RWPE1 (cell line): ENCODE measurements at regions of chr2 and their contacts with region 1.

Region 1: GRCh38 chr2:191539068-191539467 is 138.9 kb upstream of the NABP1 start:
- DNase-seq: peak; percentile 44
- H3K27ac ChIP-seq: no peak overlapping the region
- CTCF ChIP-seq: peak; percentile 61

Region 2: DNA sequence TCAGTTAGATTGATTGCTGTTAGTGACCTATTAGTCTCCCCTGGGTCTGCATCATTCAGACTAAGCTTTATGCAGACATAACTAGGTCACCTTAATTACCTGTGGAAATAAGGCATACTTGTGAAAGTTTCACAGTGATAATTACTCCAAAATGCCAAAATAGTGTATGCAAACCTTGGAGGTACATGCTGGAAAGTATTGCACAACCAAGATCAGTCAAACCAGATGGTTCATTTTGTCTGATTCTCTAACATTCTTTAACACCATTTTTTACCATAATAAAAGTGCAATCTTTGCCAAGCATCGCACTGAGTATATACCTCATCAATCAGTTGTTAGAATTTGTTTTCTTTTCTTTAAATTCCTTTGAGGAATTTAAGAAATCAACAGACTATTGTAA is 842.0 kb after region 1 on chr2:
- CTCF ChIA-PET with region 1: interaction called, 10 read pairs
- POLR2A ChIA-PET with region 1: no interaction called
- DNase-seq: no peak
- H3K27ac ChIP-seq: no peak overlapping the region
- CTCF ChIP-seq: no peak

Region 3: DNA sequence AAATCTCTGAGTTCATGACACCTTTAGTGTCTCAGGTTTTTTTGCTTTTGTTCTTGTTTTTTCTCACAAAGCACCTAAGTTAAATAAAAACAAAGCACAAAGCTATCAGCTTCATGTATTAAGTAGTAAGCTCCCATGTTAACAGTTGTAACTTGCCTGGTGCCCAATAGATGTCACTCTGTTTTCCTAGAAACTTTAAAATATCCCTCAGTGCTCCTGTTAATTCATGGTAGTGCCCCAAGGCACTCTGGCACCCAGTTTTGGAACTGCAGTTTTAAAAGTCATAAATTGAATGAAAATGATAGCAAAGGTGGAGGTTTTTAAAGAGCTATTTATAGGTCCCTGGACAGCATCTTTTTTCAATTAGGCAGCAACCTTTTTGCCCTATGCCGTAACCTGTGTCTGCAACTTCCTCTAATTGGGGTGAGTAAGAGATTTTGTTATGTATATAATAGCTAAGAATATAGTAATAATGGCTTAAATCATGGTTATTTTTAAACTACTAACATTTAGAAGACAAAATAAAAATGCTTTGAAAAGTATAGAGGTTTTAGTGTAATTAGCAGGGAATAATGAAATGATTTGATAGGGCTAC is 1210.6 kb after region 1 on chr2:
- CTCF ChIA-PET with region 1: interaction called, 10 read pairs
- POLR2A ChIA-PET with region 1: no interaction called
- DNase-seq: peak; percentile 2
- H3K27ac ChIP-seq: no peak overlapping the region
- CTCF ChIP-seq: peak; percentile 30; the same call in 1 of the 2 replicates